Breast epithelium (tissue), 4 donors: ENCODE measurements at regions of chr10 and their contacts with region 1.

Region 1: DNA sequence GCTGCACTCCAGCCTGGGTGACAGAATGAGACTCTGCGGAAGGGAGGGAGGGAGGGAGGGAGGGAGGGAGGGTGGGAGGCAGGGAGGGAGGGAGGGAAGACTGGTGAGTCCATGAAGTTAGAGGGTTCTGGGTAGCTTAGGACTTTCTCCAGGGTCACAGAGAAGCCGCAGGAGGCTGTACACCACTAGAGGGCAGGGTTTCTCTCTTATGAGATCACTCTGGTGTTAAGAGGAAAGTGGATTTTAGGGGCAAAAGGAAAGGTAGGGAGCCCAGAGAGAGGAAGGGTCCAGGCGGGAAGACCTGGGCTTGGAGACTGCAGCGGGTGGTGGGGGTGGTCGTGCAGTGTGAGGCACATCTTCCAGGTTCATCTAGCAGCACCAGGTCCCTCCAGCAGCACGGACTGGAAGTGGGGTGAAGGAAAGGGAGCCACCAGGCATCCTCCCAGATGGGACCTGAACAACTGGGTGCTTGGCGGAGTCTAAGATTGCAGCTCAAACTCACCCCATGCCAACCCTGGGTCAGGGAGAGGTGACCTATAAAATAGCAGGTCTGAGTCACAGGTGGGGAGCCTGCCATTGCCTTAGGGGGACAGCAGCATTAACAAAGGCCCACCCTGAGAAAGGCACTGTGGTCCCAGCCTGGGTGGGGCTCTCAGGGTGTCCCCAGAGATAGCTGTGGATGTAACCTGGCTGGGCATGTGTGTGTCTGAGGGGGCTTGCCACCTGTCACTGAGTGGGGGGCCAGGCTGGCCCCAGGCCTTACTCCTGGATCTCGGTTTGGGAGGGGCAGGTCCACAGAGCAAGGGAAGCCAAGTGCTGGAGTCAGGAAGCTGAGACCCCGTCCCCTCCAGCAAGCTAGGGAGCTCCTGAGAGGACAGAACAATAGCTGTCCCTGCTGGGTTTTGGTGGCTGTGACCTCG is 48.5 kb upstream of the SLC29A3 start:
- DNase-seq: no peak
- H3K4me3 ChIP-seq: no peak overlapping the region
- H3K27ac ChIP-seq: no peak overlapping the region
- H3K4me1 ChIP-seq: peaks cover 0 to 8% of the 10 kb centered on the region in 2 donors
- H3K27me3 ChIP-seq: no peaks in the 10 kb centered on the region
- CTCF ChIP-seq: peak in 1 of 3 donors; percentile 36
- POLR2A ChIP-seq: no peak

Region 2: GRCh38 chr10:70918851-70919530 is 351.6 kb before region 1 on chr10:
- intact Hi-C with region 1: loop called (anchors 10 kb)
- DNase-seq: no peak
- H3K4me3 ChIP-seq: no peak overlapping the region
- H3K27ac ChIP-seq: no peak overlapping the region
- H3K4me1 ChIP-seq: no peaks in the 10 kb centered on the region
- H3K27me3 ChIP-seq: no peaks in the 10 kb centered on the region
- CTCF ChIP-seq: no peak
- POLR2A ChIP-seq: no peak

Region 3: GRCh38 chr10:71222601-71223346 is 47.8 kb before region 1 on chr10:
- intact Hi-C with region 1: loop called (anchors 1 kb)
- DNase-seq: peak in 1 of 2 donors; percentile 28
- H3K4me3 ChIP-seq: no peak overlapping the region
- H3K27ac ChIP-seq: no peak overlapping the region
- H3K4me1 ChIP-seq: peaks cover 0 to 7% of the 10 kb centered on the region in 2 donors
- H3K27me3 ChIP-seq: no peaks in the 10 kb centered on the region
- CTCF ChIP-seq: no peak
- POLR2A ChIP-seq: no peak

Region 4: DNA sequence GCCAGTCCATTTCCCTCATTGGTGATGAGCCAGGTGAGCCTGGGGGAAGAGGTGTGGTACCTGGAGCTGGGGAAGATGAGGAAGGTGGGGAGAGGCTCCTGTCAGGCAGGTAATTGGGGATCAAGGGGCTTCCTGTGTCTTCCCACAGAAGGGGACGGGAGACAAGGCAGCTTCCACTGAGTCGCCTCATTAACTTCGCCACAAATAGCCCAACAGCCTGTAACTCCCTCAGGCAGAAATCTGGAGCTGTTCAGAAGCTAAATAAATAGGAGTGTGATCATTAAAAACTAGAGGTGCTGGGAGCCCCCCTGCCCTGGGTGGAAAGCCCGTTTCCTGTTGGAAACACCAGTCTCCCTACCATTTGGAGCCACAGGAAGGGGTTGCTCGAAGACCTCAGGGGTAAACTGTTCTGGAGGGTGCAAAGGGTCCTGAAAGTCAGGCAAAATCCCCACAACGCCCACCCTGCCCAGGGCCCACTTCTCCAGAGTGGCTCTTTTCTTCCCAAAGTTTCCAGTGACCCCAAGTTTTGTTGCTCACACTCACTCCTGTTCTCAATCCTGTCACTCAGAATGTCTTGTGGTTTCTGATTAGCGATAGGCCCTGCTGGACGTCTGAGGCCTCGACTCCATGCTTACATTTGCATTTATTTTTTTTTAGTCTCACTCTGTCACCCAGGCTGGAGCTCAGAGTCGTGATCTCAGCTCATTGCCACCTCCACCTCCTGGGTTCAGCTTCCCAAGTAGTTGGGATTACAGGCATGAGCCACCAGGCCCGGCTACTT is 32.5 kb before region 1 on chr10:
- intact Hi-C with region 1: loop called (anchors 1 kb)
- DNase-seq: no peak
- H3K4me3 ChIP-seq: no peak overlapping the region
- H3K27ac ChIP-seq: no peak overlapping the region
- H3K4me1 ChIP-seq: peaks cover 10% of the 10 kb centered on the region in 2 donors
- H3K27me3 ChIP-seq: no peaks in the 10 kb centered on the region
- CTCF ChIP-seq: no peak
- POLR2A ChIP-seq: no peak

Region 5: GRCh38 chr10:71252220-71252619 is 18.3 kb before region 1 on chr10:
- intact Hi-C with region 1: no loop called
- DNase-seq: no peak
- H3K4me3 ChIP-seq: no peak overlapping the region
- H3K27ac ChIP-seq: no peak overlapping the region
- H3K4me1 ChIP-seq: peaks cover 0 to 1% of the 10 kb centered on the region in 2 donors
- H3K27me3 ChIP-seq: no peaks in the 10 kb centered on the region
- CTCF ChIP-seq: no peak
- POLR2A ChIP-seq: no peak

Region 6: GRCh38 chr10:71795248-71795647 is 524.7 kb after region 1 on chr10:
- intact Hi-C with region 1: no loop called
- DNase-seq: no peak
- H3K4me3 ChIP-seq: no peak overlapping the region
- H3K27ac ChIP-seq: no peak overlapping the region
- H3K4me1 ChIP-seq: no peaks in the 10 kb centered on the region
- H3K27me3 ChIP-seq: no peaks in the 10 kb centered on the region
- CTCF ChIP-seq: no peak
- POLR2A ChIP-seq: no peak